ENCODE measurements at regions of chr13 and their contacts with region 1.

Region 1: DNA sequence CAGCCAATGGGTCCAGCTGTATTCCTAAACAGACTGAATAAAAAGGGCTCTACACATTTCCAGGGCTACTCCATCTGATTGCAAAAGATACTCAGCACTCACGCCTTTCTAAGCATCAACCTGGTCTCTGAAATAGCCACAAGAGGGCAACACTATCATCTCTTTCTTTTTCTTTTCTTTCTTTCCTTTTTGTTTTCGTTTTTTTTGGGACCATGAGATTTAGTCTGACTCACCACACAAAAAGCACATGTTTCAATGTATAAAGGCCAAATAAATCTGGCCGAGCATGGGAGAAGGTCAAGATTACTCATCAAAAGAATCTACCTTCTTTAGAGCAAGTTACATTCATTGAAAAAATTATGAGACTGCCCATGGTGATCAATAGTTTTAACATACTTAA is 805.6 kb upstream of the ARGLU1 start:
- DNase-seq: peak; percentile 75
- ATAC-seq: peak; percentile 76
- H3K4me3 ChIP-seq: no peak overlapping the region
- H3K27ac ChIP-seq: no peak overlapping the region
- H3K4me1 ChIP-seq: peaks cover 21% of the 10 kb centered on the region; the same call in 1 of the 2 replicates
- H3K27me3 ChIP-seq: no peaks in the 10 kb centered on the region
- CTCF ChIP-seq: peak; percentile 76

Region 2: DNA sequence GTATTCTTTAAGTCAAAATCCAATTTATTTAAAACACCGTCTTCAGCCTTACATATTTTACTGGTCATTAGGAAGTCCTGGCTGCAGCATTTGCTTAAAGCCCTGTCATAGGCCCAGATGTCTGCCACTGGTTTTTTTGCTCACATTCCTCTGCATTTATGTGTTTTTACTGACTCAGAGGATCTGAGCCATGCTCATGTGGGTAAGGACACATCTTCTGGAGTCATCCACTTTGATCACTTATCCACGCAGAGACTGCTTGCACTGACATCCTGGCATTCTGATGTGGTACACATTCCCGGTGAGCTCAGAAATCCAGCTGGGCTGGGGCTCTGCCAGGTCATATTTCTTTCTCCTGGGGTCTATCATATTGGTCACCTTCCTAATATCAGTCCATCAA is 273.9 kb before region 1 on chr13:
- CTCF ChIA-PET with region 1: no interaction called
- POLR2A ChIA-PET with region 1: no interaction called
- intact Hi-C with region 1: no loop called
- DNase-seq: peak; percentile 28
- ATAC-seq: no peak; the same call in 1 of the 2 replicates
- H3K4me3 ChIP-seq: no peak overlapping the region
- H3K27ac ChIP-seq: no peak overlapping the region
- H3K4me1 ChIP-seq: no peaks in the 10 kb centered on the region
- H3K27me3 ChIP-seq: no peaks in the 10 kb centered on the region
- CTCF ChIP-seq: no peak

Region 3: GRCh38 chr13:107211073-107211472 is 162.5 kb before region 1 on chr13:
- CTCF ChIA-PET with region 1: interaction called, 4 read pairs
- POLR2A ChIA-PET with region 1: no interaction called
- intact Hi-C with region 1: loop called (anchors 1 kb)
- DNase-seq: peak; percentile 88
- ATAC-seq: peak; percentile 93
- H3K4me3 ChIP-seq: peak overlapping the region; percentile 46; the same call in 1 of the 2 replicates
- H3K27ac ChIP-seq: no peak overlapping the region
- H3K4me1 ChIP-seq: peaks cover 13% of the 10 kb centered on the region; the same call in 1 of the 2 replicates
- H3K27me3 ChIP-seq: no peaks in the 10 kb centered on the region
- CTCF ChIP-seq: peak; percentile 89

Region 4: GRCh38 chr13:107291875-107292274 is 81.7 kb before region 1 on chr13:
- CTCF ChIA-PET with region 1: no interaction called
- POLR2A ChIA-PET with region 1: no interaction called
- intact Hi-C with region 1: loop called (anchors 5 kb)
- DNase-seq: peak; percentile 29
- ATAC-seq: peak; percentile 53
- H3K4me3 ChIP-seq: no peak overlapping the region
- H3K27ac ChIP-seq: no peak overlapping the region
- H3K4me1 ChIP-seq: 0 out of 2 replicates have a peak, but pooled peaks cover 4% of the 10 kb centered on the region
- H3K27me3 ChIP-seq: no peaks in the 10 kb centered on the region
- CTCF ChIP-seq: no peak

Region 5: GRCh38 chr13:107493266-107493665 is 119.7 kb after region 1 on chr13:
- CTCF ChIA-PET with region 1: no interaction called
- POLR2A ChIA-PET with region 1: no interaction called
- intact Hi-C with region 1: loop called (anchors 2 kb)
- DNase-seq: peak; percentile 49
- ATAC-seq: peak; percentile 86
- H3K4me3 ChIP-seq: no peak overlapping the region
- H3K27ac ChIP-seq: no peak overlapping the region
- H3K4me1 ChIP-seq: no peaks in the 10 kb centered on the region
- H3K27me3 ChIP-seq: no peaks in the 10 kb centered on the region
- CTCF ChIP-seq: no peak

Region 6: GRCh38 chr13:107650081-107650701 is 276.6 kb after region 1 on chr13:
- CTCF ChIA-PET with region 1: no interaction called
- POLR2A ChIA-PET with region 1: no interaction called
- intact Hi-C with region 1: loop called (anchors 1 kb)
- DNase-seq: peak; percentile 61
- ATAC-seq: peak; percentile 81
- H3K4me3 ChIP-seq: no peak overlapping the region
- H3K27ac ChIP-seq: no peak overlapping the region
- H3K4me1 ChIP-seq: no peaks in the 10 kb centered on the region
- H3K27me3 ChIP-seq: no peaks in the 10 kb centered on the region
- CTCF ChIP-seq: peak; percentile 89

Region 7: GRCh38 chr13:107799001-107799400 is 425.4 kb after region 1 on chr13:
- CTCF ChIA-PET with region 1: no interaction called
- POLR2A ChIA-PET with region 1: no interaction called
- intact Hi-C with region 1: loop called (anchors 1 kb)
- DNase-seq: peak; percentile 69
- ATAC-seq: peak; percentile 92
- H3K4me3 ChIP-seq: peak overlapping the region; percentile 45
- H3K27ac ChIP-seq: peak overlapping the region; percentile 49
- H3K4me1 ChIP-seq: peaks cover 23% of the 10 kb centered on the region
- H3K27me3 ChIP-seq: no peaks in the 10 kb centered on the region
- CTCF ChIP-seq: no peak

Measured in PC-3 (cell line).